ENCODE measurements at regions of chr2 and their contacts with region 1.

Region 1: DNA sequence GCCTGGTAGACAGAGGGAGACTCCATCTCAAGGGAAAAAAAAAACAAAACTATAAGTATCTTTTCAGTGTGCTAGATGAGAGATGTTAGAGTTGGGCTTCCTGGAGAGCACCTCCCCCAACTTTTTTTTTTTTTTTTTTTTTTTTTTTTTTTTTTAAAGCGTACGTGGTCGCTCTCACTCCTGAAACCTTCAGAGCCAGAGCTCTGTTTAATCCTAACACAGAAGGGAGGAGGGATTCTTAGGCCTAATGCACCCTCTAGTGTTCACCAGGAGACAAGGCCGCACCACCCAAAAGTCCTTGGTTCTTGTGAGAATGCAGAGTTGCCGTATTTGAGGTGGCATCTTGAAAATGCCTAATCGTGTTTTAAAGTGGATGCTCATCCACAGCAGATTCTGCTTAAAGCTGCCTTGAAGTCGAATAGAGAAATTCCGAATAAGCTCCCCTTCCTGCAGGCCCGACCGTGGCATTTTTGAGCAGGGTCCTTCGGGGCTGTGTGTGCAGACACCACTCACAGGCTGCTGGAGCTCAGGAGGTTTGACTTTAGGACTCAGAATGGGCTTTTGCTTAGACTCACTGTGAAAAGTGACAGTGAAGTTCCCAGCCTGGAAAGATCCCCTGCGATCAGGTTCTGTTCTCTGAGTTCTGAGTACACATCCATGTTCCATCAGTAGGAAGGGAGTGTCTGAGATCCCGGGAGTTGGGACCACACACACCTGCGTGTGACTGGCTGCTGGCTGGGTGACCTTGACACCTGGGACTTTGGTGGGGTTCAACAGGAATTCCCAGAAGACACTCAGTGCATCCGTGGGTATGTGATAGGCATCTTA is 252.6 kb downstream of the AGAP1 start:
- H3K4me3 ChIP-seq: no peak overlapping the region
- H3K27ac ChIP-seq: no peak overlapping the region
- H3K4me1 ChIP-seq: no peaks in the 10 kb centered on the region
- CTCF ChIP-seq: peak; percentile 55

Region 2: GRCh38 chr2:235135990-235136561 is 610.4 kb before region 1 on chr2:
- CTCF ChIA-PET with region 1: interaction called, 30 read pairs
- POLR2A ChIA-PET with region 1: no interaction called
- H3K4me3 ChIP-seq: no peak overlapping the region
- H3K27ac ChIP-seq: no peak overlapping the region
- H3K4me1 ChIP-seq: no peaks in the 10 kb centered on the region
- CTCF ChIP-seq: peak; percentile 56; the same call in 1 of the 2 replicates

Region 3: DNA sequence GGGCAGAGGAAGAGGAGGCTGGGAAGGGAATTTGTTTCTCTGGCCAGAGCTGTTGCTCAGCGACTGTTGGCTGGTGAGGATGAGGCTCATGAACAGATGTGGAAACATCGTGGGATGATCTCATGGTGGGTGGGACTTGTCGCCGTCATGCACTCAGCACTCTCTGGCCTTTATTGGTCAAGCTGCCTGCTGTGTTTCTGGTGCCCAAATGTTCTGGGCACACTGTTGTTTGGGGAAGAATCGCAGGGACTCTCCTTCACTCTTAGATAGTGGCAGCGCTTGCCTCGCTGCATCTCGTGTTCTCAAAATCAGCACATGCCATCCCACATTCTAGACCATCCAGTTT is 107.1 kb before region 1 on chr2:
- CTCF ChIA-PET with region 1: interaction called, 10 read pairs
- POLR2A ChIA-PET with region 1: no interaction called
- H3K4me3 ChIP-seq: no peak overlapping the region
- H3K27ac ChIP-seq: peak overlapping the region; percentile 10; the same call in 1 of the 2 replicates
- H3K4me1 ChIP-seq: peaks cover 27% of the 10 kb centered on the region
- CTCF ChIP-seq: no peak

Region 4: GRCh38 chr2:235723811-235724465 is 22.5 kb before region 1 on chr2:
- CTCF ChIA-PET with region 1: interaction called, 14 read pairs
- POLR2A ChIA-PET with region 1: no interaction called
- H3K4me3 ChIP-seq: no peak overlapping the region
- H3K27ac ChIP-seq: no peak overlapping the region
- H3K4me1 ChIP-seq: no peaks in the 10 kb centered on the region; the same call in 1 of the 2 replicates
- CTCF ChIP-seq: no peak

Region 5: GRCh38 chr2:235734688-235735231 is 11.7 kb before region 1 on chr2:
- CTCF ChIA-PET with region 1: interaction called, 17 read pairs
- POLR2A ChIA-PET with region 1: no interaction called
- H3K4me3 ChIP-seq: no peak overlapping the region
- H3K27ac ChIP-seq: no peak overlapping the region
- H3K4me1 ChIP-seq: no peaks in the 10 kb centered on the region
- CTCF ChIP-seq: no peak

Region 6: DNA sequence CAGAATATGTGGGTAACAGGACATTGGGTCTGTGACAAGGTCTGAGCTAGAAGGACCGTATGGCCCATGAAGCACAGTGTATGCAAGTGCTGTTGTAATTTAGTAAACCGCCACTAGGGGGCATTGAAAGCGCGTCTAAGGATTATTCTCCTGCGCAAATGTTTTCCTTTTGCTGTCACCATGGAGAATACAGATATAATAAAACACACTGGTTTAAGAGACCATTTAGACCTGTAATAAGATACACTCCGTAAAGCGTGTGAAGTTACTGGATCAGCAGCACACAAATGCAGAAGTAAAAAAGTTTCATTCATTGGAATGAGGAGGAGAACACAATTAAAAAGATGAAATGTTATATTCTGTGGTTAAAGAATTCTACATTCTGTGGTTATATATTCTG is 19.8 kb after region 1 on chr2:
- CTCF ChIA-PET with region 1: interaction called, 11 read pairs
- POLR2A ChIA-PET with region 1: no interaction called
- H3K4me3 ChIP-seq: no peak overlapping the region
- H3K27ac ChIP-seq: no peak overlapping the region
- H3K4me1 ChIP-seq: no peaks in the 10 kb centered on the region
- CTCF ChIP-seq: no peak; the same call in 1 of the 2 replicates

Region 7: DNA sequence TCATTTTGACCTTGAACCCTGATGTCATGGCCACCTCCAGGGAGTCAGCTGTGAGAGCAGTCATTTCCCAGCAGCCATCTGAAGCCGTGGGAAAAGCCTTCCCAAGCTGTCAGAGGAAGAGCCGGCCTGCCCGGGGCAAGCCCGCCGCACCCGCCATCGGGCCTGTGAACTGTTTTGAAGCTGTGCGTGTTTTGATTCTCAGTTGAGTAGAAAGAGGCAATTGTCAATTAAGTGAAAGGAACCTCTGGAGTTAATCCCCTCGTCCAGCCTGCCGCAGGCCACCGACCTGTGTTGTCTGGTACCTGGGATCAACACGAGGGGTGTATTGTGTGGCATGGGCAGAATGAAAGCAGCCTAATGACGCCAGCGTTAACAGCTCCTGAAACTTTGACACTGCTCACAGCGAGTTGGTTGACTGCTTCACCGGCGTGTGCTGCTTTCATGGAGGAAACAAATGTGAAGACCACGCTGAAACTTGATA is 65.8 kb after region 1 on chr2:
- CTCF ChIA-PET with region 1: no interaction called
- POLR2A ChIA-PET with region 1: no interaction called
- H3K4me3 ChIP-seq: no peak overlapping the region
- H3K27ac ChIP-seq: no peak overlapping the region
- H3K4me1 ChIP-seq: no peaks in the 10 kb centered on the region
- CTCF ChIP-seq: no peak